Activated T-helper 1 cell treated with anti-CD3 and anti-CD28 coated beads, Interleukin-12 subunit alpha, Interleukin-12 subunit beta, Interleukin-2, Interleukin-4 antibody, amounts not matched to agents 30 ng/mL and 10 ng/mL and 1 ng/mL, durations not matched to agents 14 hours and 24 hours and 36 hours (primary cell): ENCODE measurements at regions of chr11 and their contacts with region 1.

Region 1: GRCh38 chr11:125111343-125112207 is at the start of gene TMEM218:
- DNase-seq: peak; percentile 95
- H3K4me3 Mint-ChIP-seq: peak within 1 kb of the TSS; percentile 94
- H3K27ac Mint-ChIP-seq: peak within 1 kb of the TSS; percentile 95
- H3K4me1 Mint-ChIP-seq: peaks cover 17% of the 10 kb centered on the region
- H3K27me3 Mint-ChIP-seq: peaks cover 2% of the 10 kb centered on the region
- total RNA-seq, gene TMEM218: 14.6 and 18.0 TPM in 2 replicates

Region 2: GRCh38 chr11:124622531-124623451 is 488.8 kb before region 1 on chr11 and contains the start of gene TBRG1:
- intact Hi-C with region 1: loop called (anchors 1 kb)
- DNase-seq: peak; percentile 80
- H3K4me3 Mint-ChIP-seq: peak within 1 kb of the TSS; percentile 97
- H3K27ac Mint-ChIP-seq: peak within 1 kb of the TSS; percentile 95
- H3K4me1 Mint-ChIP-seq: peaks cover 29% of the 10 kb centered on the region
- H3K27me3 Mint-ChIP-seq: peaks cover 14% of the 10 kb centered on the region
- total RNA-seq, gene TBRG1: 35.1 and 35.4 TPM in 2 replicates

Region 3: GRCh38 chr11:124746621-124747243 is 364.8 kb before region 1 on chr11:
- intact Hi-C with region 1: loop called (anchors 2 kb)
- DNase-seq: peak; percentile 64
- H3K4me3 Mint-ChIP-seq: peak overlapping the region; percentile 89
- H3K27ac Mint-ChIP-seq: peak overlapping the region; percentile 86
- H3K4me1 Mint-ChIP-seq: peaks cover 28% of the 10 kb centered on the region
- H3K27me3 Mint-ChIP-seq: peaks cover 12% of the 10 kb centered on the region

Region 4: DNA sequence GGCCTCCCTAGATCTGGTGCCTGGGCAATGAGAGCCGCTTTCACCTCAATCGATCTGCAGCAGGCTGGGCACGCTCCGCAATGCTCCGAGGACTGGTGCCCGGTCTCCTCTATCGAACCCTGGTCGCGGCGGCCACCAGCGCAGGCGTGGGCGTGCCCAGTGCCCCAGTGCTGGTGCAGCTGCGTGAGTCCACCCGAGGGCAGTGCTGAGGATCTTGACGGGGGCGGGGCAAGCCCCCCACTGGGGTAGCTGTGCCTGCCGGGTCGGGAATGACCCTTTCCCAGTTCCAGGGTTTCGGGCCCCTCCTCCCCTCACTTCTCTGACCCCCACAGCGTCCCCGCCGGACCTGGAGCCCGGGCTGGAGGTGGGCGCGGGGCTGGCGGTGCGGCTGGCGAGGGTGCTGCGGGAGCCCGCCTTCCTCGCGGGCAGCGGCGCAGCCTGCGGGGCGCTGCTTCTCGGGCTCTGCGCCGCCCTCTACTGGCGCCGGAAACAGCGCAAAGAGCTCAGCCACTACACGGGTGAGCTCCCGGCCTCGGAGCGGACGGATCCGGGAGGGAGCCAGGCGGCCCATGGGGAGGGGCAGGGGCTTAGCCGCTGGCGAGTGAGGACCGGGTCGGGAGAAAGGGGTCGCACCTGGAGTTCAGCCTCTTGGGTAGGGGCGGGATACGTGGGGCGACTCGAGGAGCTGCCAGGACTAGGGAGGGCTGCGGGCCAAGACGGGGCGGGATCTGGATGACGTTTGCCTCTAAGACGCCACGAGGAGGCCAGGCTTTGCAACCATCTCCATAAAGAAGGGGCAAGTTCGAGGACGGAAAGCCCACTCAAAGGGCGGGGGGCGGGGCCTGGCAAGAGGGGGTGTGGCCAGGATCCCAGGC is 235.4 kb before region 1 on chr11:
- intact Hi-C with region 1: loop called (anchors 1 kb)
- DNase-seq: peak; percentile 73
- H3K4me3 Mint-ChIP-seq: peak overlapping the region; percentile 81
- H3K27ac Mint-ChIP-seq: peak overlapping the region; percentile 72
- H3K4me1 Mint-ChIP-seq: peaks cover 12% of the 10 kb centered on the region
- H3K27me3 Mint-ChIP-seq: peaks cover 46% of the 10 kb centered on the region

Region 5: GRCh38 chr11:125123947-125124617 is 12.5 kb after region 1 on chr11:
- intact Hi-C with region 1: loop called (anchors 1 kb)
- DNase-seq: no peak
- H3K4me3 Mint-ChIP-seq: no peak overlapping the region
- H3K27ac Mint-ChIP-seq: no peak overlapping the region
- H3K4me1 Mint-ChIP-seq: no peaks in the 10 kb centered on the region
- H3K27me3 Mint-ChIP-seq: peaks cover 33% of the 10 kb centered on the region

Region 6: GRCh38 chr11:125514336-125515101 is 402.9 kb after region 1 on chr11:
- intact Hi-C with region 1: loop called (anchors 1 kb)
- DNase-seq: peak; percentile 55
- H3K4me3 Mint-ChIP-seq: peak overlapping the region; percentile 8
- H3K27ac Mint-ChIP-seq: peak overlapping the region; percentile 83
- H3K4me1 Mint-ChIP-seq: peaks cover 57% of the 10 kb centered on the region
- H3K27me3 Mint-ChIP-seq: no peaks in the 10 kb centered on the region

Region 7: DNA sequence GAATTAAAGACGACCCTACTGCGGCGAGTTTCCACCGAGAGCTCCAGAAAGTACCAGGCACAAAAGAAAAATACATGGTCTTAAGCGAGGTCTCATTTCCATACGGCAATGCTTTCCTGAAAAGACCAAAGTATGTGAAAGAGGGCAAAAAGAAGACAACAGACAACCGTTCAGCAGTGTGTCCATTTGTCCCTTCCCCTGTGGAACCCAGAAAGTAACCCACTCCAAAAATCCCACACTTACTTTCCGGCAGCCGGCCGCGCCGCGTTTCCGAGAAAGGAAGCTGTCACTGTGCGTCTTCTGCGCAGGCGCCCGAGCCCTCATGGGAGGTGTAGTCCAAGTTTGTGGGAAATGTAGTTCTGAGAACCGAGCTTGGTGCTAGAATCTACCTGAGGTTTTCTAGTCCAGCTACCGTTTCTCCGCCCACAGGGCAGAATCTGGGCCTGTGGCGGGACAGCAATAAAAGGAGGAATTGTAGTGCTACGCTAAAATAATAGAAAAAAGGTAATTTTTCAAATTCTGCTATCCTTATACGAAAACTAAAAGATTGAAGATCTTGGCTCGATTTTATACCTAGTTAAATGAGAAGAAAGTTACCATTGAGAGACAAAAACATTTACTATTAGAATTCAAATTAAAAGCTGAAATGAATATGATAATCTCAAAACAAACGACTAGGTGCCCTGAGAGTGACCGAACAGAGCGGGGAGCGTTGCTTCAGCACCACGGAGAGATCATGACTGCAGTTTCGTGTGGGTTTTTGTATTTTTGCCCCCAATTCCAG is 791.5 kb after region 1 on chr11 and contains the start of gene PUS3:
- intact Hi-C with region 1: loop called (anchors 5 kb)
- DNase-seq: peak; percentile 85
- H3K4me3 Mint-ChIP-seq: peak within 1 kb of the TSS; percentile 98
- H3K27ac Mint-ChIP-seq: peak within 1 kb of the TSS; percentile 88
- H3K4me1 Mint-ChIP-seq: peaks cover 28% of the 10 kb centered on the region
- H3K27me3 Mint-ChIP-seq: peaks cover 34% of the 10 kb centered on the region
- total RNA-seq, gene PUS3: 16.5 and 23.6 TPM in 2 replicates